Psoas muscle (tissue), 8 donors: ENCODE measurements at regions of chrX and their contacts with region 1.

Region 1: GRCh38 chrX:57821703-57822375 is 88.4 kb downstream of the ZXDA start:
- DNase-seq: no peak
- ATAC-seq: peak; percentile 79 to 97 (median 83)
- H3K4me3 ChIP-seq: peak overlapping the region; percentile 59
- H3K27ac ChIP-seq: no peak overlapping the region
- H3K4me1 ChIP-seq: no peaks in the 10 kb centered on the region
- H3K27me3 ChIP-seq: peaks cover 0 to 20% (median 0%) of the 10 kb centered on the region in 3 donors
- CTCF ChIP-seq: peak; percentile 72

Region 2: DNA sequence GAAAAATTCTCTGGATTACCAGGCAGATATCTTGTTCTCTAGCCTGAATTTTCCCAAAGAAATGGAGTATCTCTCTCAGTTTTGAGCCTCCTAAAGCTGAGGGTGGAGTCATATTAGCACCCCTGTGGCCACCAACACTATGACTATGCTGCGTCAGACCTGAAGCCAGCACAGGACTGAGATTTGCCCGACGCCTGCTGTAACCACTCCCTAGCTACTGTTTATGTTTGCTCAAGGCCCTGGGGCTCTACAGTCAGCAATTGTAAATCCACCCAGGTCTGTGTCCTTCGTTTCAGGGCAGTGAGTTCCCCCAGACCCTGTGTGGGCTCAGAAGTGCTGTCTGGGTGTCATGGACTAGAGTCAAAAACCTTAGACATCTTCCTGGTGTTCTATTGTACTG is 27.0 kb after region 1 on chrX:
- intact Hi-C with region 1: no loop called
- DNase-seq: no peak
- ATAC-seq: no peak
- H3K4me3 ChIP-seq: no peak overlapping the region
- H3K27ac ChIP-seq: no peak overlapping the region
- H3K4me1 ChIP-seq: no peaks in the 10 kb centered on the region
- H3K27me3 ChIP-seq: no peaks in the 10 kb centered on the region
- CTCF ChIP-seq: no peak

Region 3: GRCh38 chrX:57918750-57919436 is 97.1 kb after region 1 on chrX:
- intact Hi-C with region 1: loop called in 1 of 2 experiments (anchors 5 kb)
- DNase-seq: peak in 1 of 2 donors; percentile 30
- ATAC-seq: peak; percentile 50 to 89 (median 70)
- H3K4me3 ChIP-seq: peak overlapping the region; percentile 41
- H3K27ac ChIP-seq: no peak overlapping the region
- H3K4me1 ChIP-seq: no peaks in the 10 kb centered on the region
- H3K27me3 ChIP-seq: peaks cover 0 to 10% (median 0%) of the 10 kb centered on the region in 3 donors
- CTCF ChIP-seq: peak; percentile 49

Region 4: GRCh38 chrX:57929373-57929772 is 107.5 kb after region 1 on chrX:
- intact Hi-C with region 1: loop called (anchors 1 to 5 kb)
- DNase-seq: no peak
- ATAC-seq: peak in 3 of 4 donors; percentile 48 to 67 (median 60)
- H3K4me3 ChIP-seq: no peak overlapping the region
- H3K27ac ChIP-seq: no peak overlapping the region
- H3K4me1 ChIP-seq: no peaks in the 10 kb centered on the region
- H3K27me3 ChIP-seq: no peaks in the 10 kb centered on the region
- CTCF ChIP-seq: peak; percentile 55